ENCODE measurements at regions of chr1 and their contacts with region 1.

Region 1: DNA sequence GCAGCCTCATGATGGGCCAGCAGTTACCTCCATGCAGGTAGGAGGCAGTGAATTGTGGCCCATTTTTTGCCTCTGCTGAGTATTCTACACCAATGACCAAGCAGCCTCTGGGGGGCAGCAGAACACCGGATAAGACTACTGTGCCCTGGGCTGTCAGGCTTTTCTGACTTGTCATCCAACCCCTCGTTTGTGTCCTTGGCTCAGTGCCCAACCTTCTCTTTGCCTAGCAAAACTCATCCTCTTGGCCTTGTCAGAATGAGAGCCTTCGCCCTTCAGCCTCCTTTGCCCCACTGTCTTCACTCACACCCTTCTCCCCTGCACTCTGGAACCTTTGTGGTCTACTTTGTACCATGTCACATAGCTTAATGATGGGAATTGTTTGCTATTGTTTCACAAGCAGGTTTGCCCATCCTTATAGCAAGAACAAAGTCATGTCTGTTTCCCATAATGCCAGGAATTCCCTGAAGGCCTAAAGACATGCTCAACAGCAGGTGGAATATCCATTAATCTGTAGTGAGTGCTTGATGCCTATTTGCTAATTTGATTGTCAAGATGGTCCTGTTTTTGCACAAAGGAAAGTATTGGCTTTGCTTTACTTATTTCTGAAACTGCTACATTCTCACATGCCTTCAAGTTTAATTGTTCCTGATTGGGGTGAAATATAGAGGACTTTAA is 255.9 kb downstream of the HHAT start:
- DNase-seq: peak; percentile 34
- H3K4me3 ChIP-seq: no peak overlapping the region
- H3K27ac ChIP-seq: no peak overlapping the region
- H3K27me3 ChIP-seq: no peaks in the 10 kb centered on the region
- CTCF ChIP-seq: peak; percentile 81

Region 2: DNA sequence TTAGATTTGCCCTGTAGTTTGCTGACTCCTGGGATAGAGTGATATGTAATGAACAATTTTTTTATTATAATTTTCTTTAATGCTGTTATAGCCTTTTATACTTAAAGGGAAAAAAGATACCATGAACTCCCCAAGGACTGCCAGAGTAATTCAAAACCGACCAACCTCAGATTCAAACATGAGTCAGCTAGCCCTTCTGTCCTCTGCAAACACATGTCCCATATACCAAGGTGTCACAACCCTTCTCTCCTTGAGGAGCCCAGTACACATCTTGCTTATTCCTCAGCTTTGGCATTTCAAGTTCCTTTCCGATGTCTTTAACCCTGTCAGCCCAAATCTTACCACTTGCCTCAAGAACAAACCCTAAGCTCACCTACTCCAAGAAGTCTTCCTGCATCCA is 364.5 kb after region 1 on chr1:
- CTCF ChIA-PET with region 1: interaction called, 11 read pairs
- POLR2A ChIA-PET with region 1: no interaction called
- DNase-seq: no peak
- H3K4me3 ChIP-seq: no peak overlapping the region
- H3K27ac ChIP-seq: no peak overlapping the region
- H3K27me3 ChIP-seq: no peaks in the 10 kb centered on the region
- CTCF ChIP-seq: no peak